T-cell (primary cell): ENCODE measurements at regions of chr9 and their contacts with region 1.

Region 1: DNA sequence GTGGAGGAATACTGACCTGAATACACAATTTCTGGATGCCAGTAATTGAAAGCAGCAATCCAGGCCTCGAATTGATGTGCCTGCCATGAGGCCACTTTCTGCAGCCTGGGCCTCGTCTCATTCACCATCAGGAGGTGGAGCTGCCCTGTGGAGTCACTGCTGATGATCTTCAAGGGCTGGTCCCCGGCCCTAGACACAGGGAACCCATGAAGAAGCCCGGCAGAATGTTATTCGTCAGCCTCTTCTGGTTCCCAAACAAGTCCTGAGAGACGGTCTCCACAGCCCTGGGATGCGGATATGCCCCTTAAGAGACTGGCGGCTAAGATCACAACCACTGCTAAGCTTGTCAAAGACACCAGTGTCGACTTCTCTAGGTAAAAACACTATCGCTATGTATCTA is 4.5 kb downstream of the DPH7 start:
- DNase-seq: no peak
- ATAC-seq: no peak
- H3K4me3 ChIP-seq: no peak overlapping the region
- H3K4me3 Mint-ChIP-seq: no peak overlapping the region
- H3K27ac ChIP-seq: no peak overlapping the region
- H3K27ac Mint-ChIP-seq: no peak overlapping the region
- H3K4me1 ChIP-seq: peaks cover 9 to 29% of the 10 kb centered on the region in 2 experiments
- H3K4me1 Mint-ChIP-seq: peaks cover 41 to 44% (median 42%) of the 10 kb centered on the region in 3 donors
- H3K27me3 ChIP-seq: no peaks in the 10 kb centered on the region
- H3K27me3 Mint-ChIP-seq: no peaks in the 10 kb centered on the region

Region 2: GRCh38 chr9:137311986-137312851 is 262.0 kb before region 1 on chr9:
- CTCF ChIA-PET with region 1: no interaction called
- POLR2A ChIA-PET with region 1: interaction called in 1 of 2 experiments, 10 read pairs
- DNase-seq: no peak
- ATAC-seq: no peak
- H3K4me3 ChIP-seq: no peak overlapping the region
- H3K4me3 Mint-ChIP-seq: no peak overlapping the region
- H3K27ac ChIP-seq: no peak overlapping the region
- H3K27ac Mint-ChIP-seq: no peak overlapping the region
- H3K4me1 ChIP-seq: peaks cover 0 to 23% of the 10 kb centered on the region in 2 experiments
- H3K4me1 Mint-ChIP-seq: peaks cover 0 to 1% (median 0%) of the 10 kb centered on the region in 3 donors
- H3K27me3 ChIP-seq: peaks cover 0 to 31% of the 10 kb centered on the region in 2 experiments
- H3K27me3 Mint-ChIP-seq: peaks cover 0 to 9% of the 10 kb centered on the region in 2 donors

Region 3: GRCh38 chr9:137470785-137471184 is 103.4 kb before region 1 on chr9:
- CTCF ChIA-PET with region 1: no interaction called
- POLR2A ChIA-PET with region 1: no interaction called
- DNase-seq: no peak
- ATAC-seq: peak in 1 of 4 experiments; percentile 61
- H3K4me3 ChIP-seq: no peak overlapping the region
- H3K4me3 Mint-ChIP-seq: no peak overlapping the region
- H3K27ac ChIP-seq: no peak overlapping the region
- H3K27ac Mint-ChIP-seq: no peak overlapping the region
- H3K4me1 ChIP-seq: peaks cover 0 to 3% of the 10 kb centered on the region in 2 experiments
- H3K4me1 Mint-ChIP-seq: peaks cover 5 to 12% (median 11%) of the 10 kb centered on the region in 3 donors
- H3K27me3 ChIP-seq: peaks cover 0 to 4% of the 10 kb centered on the region in 2 experiments
- H3K27me3 Mint-ChIP-seq: no peaks in the 10 kb centered on the region

Region 4: GRCh38 chr9:137564134-137564533 is 10.1 kb before region 1 on chr9:
- CTCF ChIA-PET with region 1: no interaction called
- POLR2A ChIA-PET with region 1: no interaction called
- DNase-seq: no peak
- ATAC-seq: no peak
- H3K4me3 ChIP-seq: no peak overlapping the region
- H3K4me3 Mint-ChIP-seq: no peak overlapping the region
- H3K27ac ChIP-seq: no peak overlapping the region
- H3K27ac Mint-ChIP-seq: no peak overlapping the region
- H3K4me1 ChIP-seq: no peaks in the 10 kb centered on the region
- H3K4me1 Mint-ChIP-seq: peaks cover 2 to 5% (median 2%) of the 10 kb centered on the region in 3 donors
- H3K27me3 ChIP-seq: no peaks in the 10 kb centered on the region
- H3K27me3 Mint-ChIP-seq: no peaks in the 10 kb centered on the region

Region 5: DNA sequence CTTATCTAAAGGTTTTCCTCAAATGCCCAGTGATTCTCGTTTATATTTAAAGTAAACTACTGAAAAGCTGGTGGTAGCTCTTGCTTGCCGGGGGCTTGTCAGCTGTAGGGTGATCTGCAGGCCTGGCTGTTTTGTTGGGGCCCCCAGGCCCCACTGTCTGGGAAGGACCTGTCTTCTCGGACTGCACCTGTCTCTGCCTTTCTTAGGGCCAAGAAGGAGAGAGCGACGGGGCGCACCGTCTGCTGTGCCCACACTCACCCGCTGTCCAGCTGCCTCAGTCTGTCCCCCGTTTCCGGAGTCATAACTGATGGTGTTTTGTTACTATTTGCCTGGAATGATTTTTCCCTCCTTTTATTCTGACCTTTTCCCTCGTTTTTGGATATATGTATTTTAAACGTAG is 209.3 kb after region 1 on chr9:
- CTCF ChIA-PET with region 1: no interaction called
- POLR2A ChIA-PET with region 1: no interaction called
- DNase-seq: no peak
- ATAC-seq: no peak
- H3K4me3 ChIP-seq: no peak overlapping the region
- H3K4me3 Mint-ChIP-seq: no peak overlapping the region
- H3K27ac ChIP-seq: no peak overlapping the region
- H3K27ac Mint-ChIP-seq: no peak overlapping the region
- H3K4me1 ChIP-seq: peaks cover 0 to 9% of the 10 kb centered on the region in 2 experiments
- H3K4me1 Mint-ChIP-seq: peaks cover 2 to 5% (median 4%) of the 10 kb centered on the region in 3 donors
- H3K27me3 ChIP-seq: no peaks in the 10 kb centered on the region
- H3K27me3 Mint-ChIP-seq: no peaks in the 10 kb centered on the region